ENCODE measurements at regions of chr22 and their contacts with region 1.

Region 1: GRCh38 chr22:20916983-20917810 is at the start of gene CRKL:
- DNase-seq: peak; percentile 92 to 99 (median 98)

Region 2: DNA sequence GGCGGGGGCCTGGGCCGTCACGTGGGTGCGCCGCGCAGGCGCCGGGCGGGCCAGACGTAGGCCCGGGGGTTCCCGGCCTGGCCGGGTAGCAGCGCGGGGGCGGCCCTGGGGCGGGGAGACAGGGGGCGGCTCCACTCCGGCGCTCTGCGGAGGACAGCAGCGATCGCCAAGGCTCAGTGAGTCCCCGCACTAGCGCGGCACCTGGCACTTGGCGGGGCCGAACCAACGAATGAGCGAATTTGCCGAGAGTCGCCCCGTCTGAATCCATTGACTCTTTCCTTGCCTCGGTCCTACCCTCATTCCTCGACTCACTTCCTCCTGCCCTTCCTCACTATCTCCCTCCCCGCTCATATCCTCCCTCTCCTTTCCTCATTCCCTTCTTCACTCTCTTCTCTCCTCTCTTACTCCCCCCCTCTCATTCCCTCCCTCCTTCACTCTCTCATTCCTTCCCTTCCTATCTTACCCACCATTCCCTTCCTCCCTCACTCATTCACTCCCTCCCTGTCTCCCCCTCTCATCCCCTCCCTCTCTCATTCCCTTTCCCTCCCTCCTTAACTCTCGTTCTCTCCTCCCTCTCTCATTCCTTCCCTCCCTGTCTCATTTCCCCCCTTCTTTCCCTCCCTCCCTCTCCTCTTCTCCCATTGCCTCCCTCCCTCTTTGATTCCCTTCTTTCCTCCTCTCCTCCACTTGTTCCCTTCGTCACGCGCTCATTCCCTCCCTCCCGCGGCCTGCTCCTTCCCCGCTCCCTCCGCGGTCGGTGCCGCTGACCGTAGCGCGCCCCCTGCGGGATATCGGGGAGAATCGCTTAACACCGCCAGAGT is 421.1 kb before region 1 on chr22:
- intact Hi-C with region 1: loop called (anchors 10 kb)
- DNase-seq: peak; percentile 64 to 98 (median 94)

Region 3: GRCh38 chr22:20571531-20572007 is 345.6 kb before region 1 on chr22:
- intact Hi-C with region 1: no loop called
- DNase-seq: peak in 20 of 42 donors; percentile 30 to 75 (median 45)

Region 4: GRCh38 chr22:20858615-20859416 is 58.4 kb before region 1 on chr22 and contains the starts of genes PI4KA and SNAP29:
- intact Hi-C with region 1: loop called (anchors 5 kb)
- DNase-seq: peak; percentile 96 to 99 (median 98)

Region 5: DNA sequence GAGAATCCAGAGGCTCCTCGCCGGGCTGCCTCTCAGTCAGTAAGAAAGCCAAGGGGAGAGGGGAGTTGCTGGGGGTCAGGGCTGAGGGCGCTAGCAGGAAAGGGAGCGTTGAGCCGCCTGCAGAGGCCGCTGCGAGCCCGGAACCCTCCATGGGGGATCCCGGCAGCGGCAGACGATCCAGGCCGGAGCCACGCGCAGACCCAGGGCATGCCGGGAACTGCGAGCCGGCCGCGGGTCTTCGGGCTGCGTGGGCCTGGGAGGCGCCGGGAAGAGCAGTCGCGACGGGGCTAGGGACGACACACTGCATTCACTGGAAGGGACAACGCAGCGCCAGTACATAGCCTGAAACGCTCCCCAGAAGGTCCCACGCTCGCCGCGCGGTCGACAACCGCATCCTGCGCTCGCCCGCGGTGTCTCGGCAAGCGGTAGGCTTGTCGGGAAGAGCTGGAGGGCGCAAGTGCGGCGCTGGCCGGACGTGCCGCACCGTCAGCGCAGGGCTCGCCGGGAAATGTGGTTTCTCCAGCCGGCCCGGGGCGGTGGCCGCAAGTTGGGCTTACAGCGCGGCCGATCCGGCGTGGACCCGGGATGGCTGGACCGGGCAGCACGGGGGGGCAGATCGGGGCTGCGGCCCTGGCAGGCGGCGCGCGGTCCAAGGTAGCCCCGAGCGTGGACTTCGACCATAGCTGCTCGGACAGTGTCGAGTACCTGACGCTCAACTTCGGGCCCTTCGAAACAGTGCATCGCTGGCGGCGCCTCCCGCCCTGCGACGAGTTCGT is 64.8 kb after region 1 on chr22 and contains the start of gene LZTR1:
- intact Hi-C with region 1: loop called (anchors 5 kb)
- DNase-seq: peak; percentile 68 to 95 (median 91)

Region 6: DNA sequence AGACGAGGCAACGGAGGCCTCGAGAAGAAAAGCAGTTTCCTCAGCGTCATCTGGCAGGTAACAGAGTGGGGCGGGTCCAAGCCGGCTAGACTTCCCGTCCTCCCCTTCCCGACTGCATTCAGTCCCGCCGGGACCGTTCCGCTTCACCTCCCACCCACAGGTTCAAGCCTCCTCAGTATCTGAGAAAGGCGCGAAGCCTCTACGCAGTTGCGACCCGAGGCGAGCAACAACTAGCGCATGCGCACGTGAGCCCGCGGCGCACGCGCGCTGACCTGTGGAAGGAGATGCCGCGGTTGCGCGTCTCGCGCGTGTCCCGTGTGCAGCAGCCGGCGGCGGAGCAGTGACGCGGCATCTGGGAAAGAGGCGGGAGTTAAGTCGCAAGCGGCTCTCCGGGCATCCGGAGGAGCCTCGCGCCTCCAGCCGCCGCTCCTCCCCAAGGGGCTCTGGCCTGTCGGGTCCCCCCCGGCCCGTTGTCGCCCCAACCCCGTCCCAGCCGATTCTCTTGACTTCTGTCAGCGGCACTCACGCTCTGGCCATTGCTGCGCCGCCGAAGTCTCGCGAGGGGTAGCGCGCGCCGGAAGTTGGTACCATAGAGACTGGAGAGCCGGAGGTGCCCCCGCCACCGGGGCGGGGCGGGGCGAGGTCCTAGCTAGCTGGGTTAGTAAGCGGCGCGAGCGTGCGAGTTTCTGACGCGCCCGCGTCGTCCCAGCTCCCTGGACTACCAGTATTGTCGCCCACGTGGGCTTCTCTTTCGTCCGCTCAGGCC is 84.5 kb after region 1 on chr22 and contains the start of gene THAP7:
- intact Hi-C with region 1: loop called (anchors 5 kb)
- DNase-seq: peak; percentile 93 to 99 (median 97)

Measured in head of caudate nucleus (tissue), 42 donors.